ENCODE measurements at regions of chr18 and their contacts with region 1.

Region 1: GRCh38 chr18:74495581-74496507 is at the start of gene CNDP2:
- DNase-seq: peak; percentile 100
- ATAC-seq: peak; percentile 80
- H3K4me3 Mint-ChIP-seq: peak within 1 kb of the TSS; percentile 85
- H3K27ac Mint-ChIP-seq: peak within 1 kb of the TSS; percentile 99
- H3K4me1 Mint-ChIP-seq: peaks cover 41% of the 10 kb centered on the region
- H3K27me3 Mint-ChIP-seq: no peaks in the 10 kb centered on the region
- CTCF ChIP-seq: no peak
- total RNA-seq, gene CNDP2: 121 to 136 TPM

Region 2: DNA sequence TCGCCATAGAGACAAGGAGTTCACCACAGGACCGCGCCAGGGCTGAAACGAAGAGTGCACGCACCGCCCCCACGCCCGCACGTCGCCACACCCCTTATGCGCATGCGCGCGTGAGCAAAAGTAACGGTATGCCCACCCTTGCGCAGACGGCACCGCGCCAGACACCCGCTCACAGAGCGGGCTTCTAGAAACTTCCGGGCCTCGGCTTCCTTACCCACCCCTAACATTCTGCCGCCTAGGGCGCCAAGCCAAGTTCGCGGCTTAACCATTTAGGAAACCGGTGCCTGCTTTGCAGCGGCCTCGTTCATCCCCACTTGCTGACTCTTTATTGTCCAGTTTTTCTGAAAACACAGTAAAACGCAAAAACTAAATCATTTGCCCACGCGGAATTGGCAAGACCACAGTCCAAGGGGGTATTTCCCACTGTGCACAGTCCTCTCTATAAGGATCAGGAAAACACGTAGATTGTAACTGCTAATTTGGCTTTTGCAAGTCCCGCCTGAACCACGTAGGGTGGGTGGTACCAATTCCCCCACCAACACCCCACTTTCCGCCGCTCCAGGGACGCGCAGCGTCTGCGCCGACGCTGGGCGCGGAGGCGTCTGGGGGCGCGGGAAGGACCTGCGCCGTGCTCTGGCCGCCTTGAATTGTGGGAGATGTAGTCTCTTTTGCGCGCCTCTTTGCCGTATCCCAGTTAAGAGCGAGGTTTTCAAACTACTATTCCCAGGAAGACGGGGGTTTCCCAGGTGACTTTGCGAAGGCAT is 347.9 kb before region 1 on chr18 and contains the starts of genes FBXO15 and TIMM21:
- CTCF ChIA-PET with region 1: no interaction called
- POLR2A ChIA-PET with region 1: no interaction called
- intact Hi-C with region 1: loop called (anchors 5 kb)
- DNase-seq: peak; percentile 99
- ATAC-seq: peak; percentile 87
- H3K4me3 Mint-ChIP-seq: peak within 1 kb of the TSS; percentile 98
- H3K27ac Mint-ChIP-seq: peak within 1 kb of the TSS; percentile 99
- H3K4me1 Mint-ChIP-seq: peaks cover 43% of the 10 kb centered on the region
- H3K27me3 Mint-ChIP-seq: peaks cover 2% of the 10 kb centered on the region
- CTCF ChIP-seq: no peak
- total RNA-seq, gene FBXO15: 2.1 TPM
- total RNA-seq, gene TIMM21: 70.2 to 71.2 TPM

Region 3: DNA sequence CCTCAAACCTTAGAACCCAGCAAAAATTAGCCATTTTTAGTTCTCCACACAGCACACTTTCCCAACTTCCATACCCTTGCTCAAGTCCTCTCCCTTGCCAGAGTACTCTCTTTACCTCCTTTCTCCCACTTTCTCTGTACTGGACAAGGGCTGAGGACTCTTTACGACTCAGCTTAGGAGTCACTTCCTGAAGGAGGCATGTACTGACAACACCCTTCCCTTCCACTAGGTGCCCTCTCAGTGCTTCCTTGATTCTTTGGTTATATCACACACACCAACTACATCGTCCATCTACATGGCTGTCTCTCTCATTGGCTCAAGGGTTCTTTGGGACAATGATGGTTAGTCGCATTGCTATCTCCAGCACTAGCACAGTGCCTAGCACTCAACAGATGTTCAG is 185.4 kb before region 1 on chr18:
- CTCF ChIA-PET with region 1: interaction called, 10 read pairs
- POLR2A ChIA-PET with region 1: no interaction called
- intact Hi-C with region 1: no loop called
- DNase-seq: peak; percentile 20
- ATAC-seq: peak; percentile 91
- H3K4me3 Mint-ChIP-seq: no peak overlapping the region
- H3K27ac Mint-ChIP-seq: no peak overlapping the region
- H3K4me1 Mint-ChIP-seq: peaks cover 2% of the 10 kb centered on the region
- H3K27me3 Mint-ChIP-seq: peaks cover 24% of the 10 kb centered on the region
- CTCF ChIP-seq: peak; percentile 42

Region 4: GRCh38 chr18:74353169-74353775 is 142.6 kb before region 1 on chr18:
- CTCF ChIA-PET with region 1: interaction called, 198 read pairs
- POLR2A ChIA-PET with region 1: no interaction called
- intact Hi-C with region 1: loop called (anchors 1 kb)
- DNase-seq: peak; percentile 72
- ATAC-seq: peak; percentile 86
- H3K4me3 Mint-ChIP-seq: no peak overlapping the region
- H3K27ac Mint-ChIP-seq: no peak overlapping the region
- H3K4me1 Mint-ChIP-seq: peaks cover 6% of the 10 kb centered on the region
- H3K27me3 Mint-ChIP-seq: no peaks in the 10 kb centered on the region
- CTCF ChIP-seq: peak; percentile 73

Region 5: GRCh38 chr18:74446631-74447403 is 49.0 kb before region 1 on chr18:
- CTCF ChIA-PET with region 1: no interaction called
- POLR2A ChIA-PET with region 1: no interaction called
- intact Hi-C with region 1: no loop called
- DNase-seq: no peak
- ATAC-seq: no peak
- H3K4me3 Mint-ChIP-seq: no peak overlapping the region
- H3K27ac Mint-ChIP-seq: no peak overlapping the region
- H3K4me1 Mint-ChIP-seq: no peaks in the 10 kb centered on the region
- H3K27me3 Mint-ChIP-seq: no peaks in the 10 kb centered on the region
- CTCF ChIP-seq: no peak

Region 6: GRCh38 chr18:74551936-74552555 is 56.2 kb after region 1 on chr18:
- CTCF ChIA-PET with region 1: interaction called, 7 read pairs
- POLR2A ChIA-PET with region 1: no interaction called
- intact Hi-C with region 1: loop called (anchors 5 kb)
- DNase-seq: peak; percentile 91
- ATAC-seq: peak; percentile 99
- H3K4me3 Mint-ChIP-seq: no peak overlapping the region
- H3K27ac Mint-ChIP-seq: no peak overlapping the region
- H3K4me1 Mint-ChIP-seq: no peaks in the 10 kb centered on the region
- H3K27me3 Mint-ChIP-seq: peaks cover 7% of the 10 kb centered on the region
- CTCF ChIP-seq: peak; percentile 72

Region 7: DNA sequence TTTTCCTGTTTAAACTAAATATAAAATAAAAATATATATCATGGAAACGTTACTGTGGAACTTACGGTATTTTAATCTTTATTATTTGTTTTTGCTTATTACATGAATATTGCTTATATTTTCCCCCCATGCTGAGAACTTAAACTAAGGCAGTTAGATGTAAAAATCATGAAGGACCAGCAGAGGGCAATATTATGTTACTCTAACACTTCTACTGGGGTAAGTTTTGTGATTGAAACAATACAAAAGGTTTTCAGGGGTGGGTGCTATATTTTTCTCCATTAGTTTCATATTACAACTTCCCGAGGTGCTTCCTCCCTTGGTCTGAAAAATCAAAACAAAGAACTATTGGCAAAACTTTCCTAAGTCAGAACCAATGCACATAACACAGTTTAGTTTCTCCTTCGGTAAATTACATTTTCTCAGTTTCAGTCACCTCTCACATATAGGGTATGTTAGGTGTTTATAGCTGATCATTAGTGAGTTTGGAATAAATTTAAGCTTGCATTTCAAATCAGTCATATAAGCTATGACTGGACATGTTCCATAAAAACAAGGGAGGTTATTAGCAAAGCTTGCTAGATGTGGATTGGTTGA is 156.6 kb after region 1 on chr18:
- CTCF ChIA-PET with region 1: no interaction called
- POLR2A ChIA-PET with region 1: no interaction called
- intact Hi-C with region 1: no loop called
- DNase-seq: no peak
- ATAC-seq: no peak
- H3K4me3 Mint-ChIP-seq: no peak overlapping the region
- H3K27ac Mint-ChIP-seq: no peak overlapping the region
- H3K4me1 Mint-ChIP-seq: peaks cover 3% of the 10 kb centered on the region
- H3K27me3 Mint-ChIP-seq: no peaks in the 10 kb centered on the region
- CTCF ChIP-seq: peak; percentile 74

Region 8: DNA sequence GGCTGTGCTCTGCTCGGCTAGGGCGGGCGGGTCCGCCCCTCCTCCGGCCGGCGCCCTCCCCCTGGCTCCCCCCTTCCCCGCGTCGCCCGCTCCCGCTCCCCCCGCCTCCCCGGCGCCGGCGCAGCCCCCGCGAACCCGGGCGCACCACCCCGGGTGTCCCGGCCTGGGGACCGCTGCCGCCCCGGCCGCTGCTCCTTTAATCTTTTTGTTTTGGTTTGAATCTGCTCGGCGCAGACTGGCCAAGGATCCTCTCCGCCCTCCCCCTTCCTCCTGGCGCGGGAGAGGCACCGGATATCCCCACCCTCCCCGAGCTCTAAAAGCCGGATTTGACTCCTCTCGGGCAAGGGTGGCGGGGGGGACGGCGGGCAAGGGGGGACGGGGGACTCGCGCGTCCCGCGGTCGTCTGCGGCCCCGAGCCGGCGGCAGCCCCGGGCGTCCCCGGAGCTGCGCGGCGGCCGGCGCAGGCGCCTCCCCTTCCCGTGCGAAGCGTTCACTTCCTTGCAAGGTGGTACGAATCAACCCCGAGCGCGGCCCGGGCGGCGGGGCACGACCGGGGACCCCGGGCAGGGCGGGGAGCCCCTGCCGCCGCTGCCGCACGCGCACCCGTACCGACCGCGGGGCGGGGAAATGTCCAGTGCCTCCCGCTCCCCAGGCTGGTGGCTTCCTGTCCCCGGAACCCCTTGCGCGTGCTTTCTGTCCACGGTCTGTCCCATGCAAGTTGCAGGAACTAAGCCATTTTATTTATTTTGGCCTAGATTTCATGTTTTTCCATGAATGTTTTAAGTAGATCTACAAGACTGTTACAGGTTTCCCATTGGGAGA is 713.5 kb after region 1 on chr18 and contains the start of gene PTGR3:
- CTCF ChIA-PET with region 1: no interaction called
- POLR2A ChIA-PET with region 1: no interaction called
- intact Hi-C with region 1: loop called (anchors 5 kb)
- DNase-seq: peak; percentile 89
- ATAC-seq: peak; percentile 66
- H3K4me3 Mint-ChIP-seq: peak within 1 kb of the TSS; percentile 94
- H3K27ac Mint-ChIP-seq: peak within 1 kb of the TSS; percentile 98
- H3K4me1 Mint-ChIP-seq: peaks cover 52% of the 10 kb centered on the region
- H3K27me3 Mint-ChIP-seq: peaks cover 17% of the 10 kb centered on the region
- CTCF ChIP-seq: no peak
- total RNA-seq, gene PTGR3: 20.0 to 21.1 TPM